SK-N-SH (cell line): ENCODE measurements at regions of chr9 and their contacts with region 1.

Region 1: GRCh38 chr9:129460323-129461261 is 160.3 kb downstream of the C9orf50 start:
- DNase-seq: peak; percentile 96
- H3K4me3 ChIP-seq: peak overlapping the region; percentile 33 to 55
- H3K27ac ChIP-seq: peak overlapping the region; percentile 99 to 100
- H3K4me1 ChIP-seq: peaks cover 39 to 44% of the 10 kb centered on the region in 2 experiments; a peak in 3 of 4 replicates
- H3K27me3 ChIP-seq: no peaks in the 10 kb centered on the region
- CTCF ChIP-seq: no peak
- EP300 ChIP-seq: peak; percentile 44 to 46; a peak in 2 of 4 replicates
- RAD21 ChIP-seq: peak; percentile 39

Region 2: GRCh38 chr9:129208207-129209032 is 252.2 kb before region 1 on chr9:
- CTCF ChIA-PET with region 1: no interaction called
- POLR2A ChIA-PET with region 1: no interaction called
- DNase-seq: no peak
- H3K4me3 ChIP-seq: no peak overlapping the region
- H3K27ac ChIP-seq: no peak overlapping the region
- H3K4me1 ChIP-seq: peaks cover 0 to 9% of the 10 kb centered on the region in 2 experiments; a peak in 1 of 4 replicates
- H3K27me3 ChIP-seq: no peaks in the 10 kb centered on the region
- CTCF ChIP-seq: no peak
- EP300 ChIP-seq: no peak
- RAD21 ChIP-seq: no peak

Region 3: DNA sequence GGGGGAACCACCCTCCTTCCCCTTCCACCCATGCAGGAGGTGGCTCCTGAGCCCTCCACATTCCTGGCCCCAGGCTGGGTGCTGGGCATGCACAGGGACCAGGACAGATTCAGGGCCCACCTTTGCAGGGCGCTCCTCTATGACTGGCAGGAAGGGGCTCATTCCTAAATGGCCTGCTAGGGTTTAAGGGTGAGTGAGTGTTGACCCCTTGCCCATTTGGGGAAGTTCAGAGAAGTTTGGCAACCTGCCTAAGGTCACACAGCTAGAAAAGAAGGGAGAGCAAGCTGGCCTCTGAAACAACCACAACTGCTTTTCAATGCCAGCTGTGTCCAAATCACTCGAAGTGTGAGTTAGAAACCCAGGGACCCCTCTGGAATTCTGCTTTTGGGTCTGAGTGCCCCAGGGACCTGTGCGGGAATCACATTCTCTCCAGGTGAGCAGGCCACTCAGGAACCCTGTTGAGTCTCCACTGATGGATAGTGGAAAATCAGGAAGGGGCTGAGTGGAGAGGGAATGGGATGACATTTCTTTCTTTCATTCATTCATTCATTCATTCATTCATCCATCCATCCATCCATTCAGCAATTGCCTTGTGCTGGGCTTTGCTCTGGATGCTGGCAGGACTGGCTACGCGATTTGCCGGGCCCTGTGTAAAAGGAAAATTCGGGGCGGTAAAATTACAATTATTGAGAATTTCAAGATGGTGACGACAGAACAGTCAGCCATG is 31.6 kb before region 1 on chr9:
- CTCF ChIA-PET with region 1: interaction called, 12 read pairs
- POLR2A ChIA-PET with region 1: interaction called, 23 read pairs
- DNase-seq: no peak
- H3K4me3 ChIP-seq: no peak overlapping the region
- H3K27ac ChIP-seq: peak overlapping the region in 1 of 2 experiments; percentile 62; a peak in 2 of 4 replicates
- H3K4me1 ChIP-seq: peaks cover 0 to 44% of the 10 kb centered on the region in 2 experiments; a peak in 1 of 4 replicates
- H3K27me3 ChIP-seq: no peaks in the 10 kb centered on the region
- CTCF ChIP-seq: no peak
- EP300 ChIP-seq: no peak
- RAD21 ChIP-seq: no peak

Region 4: DNA sequence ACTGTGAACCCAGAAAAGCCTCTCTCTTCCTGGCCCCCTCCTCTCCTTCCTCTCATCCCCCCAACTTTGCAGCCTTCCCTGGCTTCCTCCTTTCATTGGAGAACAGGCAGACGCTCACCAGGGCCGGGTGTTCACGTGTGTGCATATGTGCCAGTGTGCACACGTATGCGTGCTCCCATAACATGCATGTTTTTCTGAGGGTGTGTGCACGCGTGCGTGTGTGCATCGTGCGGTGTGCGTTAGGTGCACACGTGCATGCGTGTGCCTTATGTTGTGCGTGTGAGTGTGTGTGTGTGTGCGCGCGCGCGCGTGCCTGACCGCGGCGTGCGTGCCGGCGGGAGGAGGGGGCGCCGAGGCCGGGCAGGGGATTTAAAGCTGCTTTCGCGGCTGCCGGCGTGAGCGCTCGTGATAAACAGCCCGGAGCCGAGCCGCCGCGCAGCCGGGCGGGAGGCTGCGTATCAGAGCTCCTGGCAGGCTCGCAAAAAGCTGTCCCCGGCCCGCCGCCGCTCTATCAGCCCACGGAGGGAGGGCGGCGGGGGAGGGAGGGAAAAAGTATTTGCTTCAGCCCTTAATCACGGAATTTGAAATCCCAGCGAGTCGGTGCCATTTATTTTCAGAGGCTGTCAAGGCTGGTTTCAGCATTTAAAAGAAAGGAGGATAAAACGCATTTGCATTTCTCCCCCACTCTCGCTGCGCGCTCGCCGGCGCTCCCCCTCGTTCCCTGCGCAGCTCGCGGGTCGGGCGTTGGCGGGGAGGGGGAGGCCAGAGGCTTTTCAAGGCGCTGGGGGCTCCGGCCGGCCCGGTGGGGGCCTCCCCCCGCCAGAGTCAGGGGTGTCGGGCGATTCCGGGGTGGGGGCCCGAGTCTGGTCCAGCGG is 23.6 kb before region 1 on chr9:
- CTCF ChIA-PET with region 1: interaction called, 3 read pairs
- POLR2A ChIA-PET with region 1: interaction called, 17 read pairs
- DNase-seq: peak; percentile 88
- H3K4me3 ChIP-seq: peak overlapping the region; percentile 51 to 70
- H3K27ac ChIP-seq: peak overlapping the region in 1 of 2 experiments; percentile 64; a peak in 3 of 4 replicates
- H3K4me1 ChIP-seq: peaks cover 0 to 26% of the 10 kb centered on the region in 2 experiments; a peak in 1 of 4 replicates
- H3K27me3 ChIP-seq: no peaks in the 10 kb centered on the region
- CTCF ChIP-seq: no peak
- EP300 ChIP-seq: 0 out of 4 replicates have a peak, but pooled peaks of 1 of the 2 experiments have one; percentile 17
- RAD21 ChIP-seq: no peak; the same call in 1 of the 2 replicates

Region 5: DNA sequence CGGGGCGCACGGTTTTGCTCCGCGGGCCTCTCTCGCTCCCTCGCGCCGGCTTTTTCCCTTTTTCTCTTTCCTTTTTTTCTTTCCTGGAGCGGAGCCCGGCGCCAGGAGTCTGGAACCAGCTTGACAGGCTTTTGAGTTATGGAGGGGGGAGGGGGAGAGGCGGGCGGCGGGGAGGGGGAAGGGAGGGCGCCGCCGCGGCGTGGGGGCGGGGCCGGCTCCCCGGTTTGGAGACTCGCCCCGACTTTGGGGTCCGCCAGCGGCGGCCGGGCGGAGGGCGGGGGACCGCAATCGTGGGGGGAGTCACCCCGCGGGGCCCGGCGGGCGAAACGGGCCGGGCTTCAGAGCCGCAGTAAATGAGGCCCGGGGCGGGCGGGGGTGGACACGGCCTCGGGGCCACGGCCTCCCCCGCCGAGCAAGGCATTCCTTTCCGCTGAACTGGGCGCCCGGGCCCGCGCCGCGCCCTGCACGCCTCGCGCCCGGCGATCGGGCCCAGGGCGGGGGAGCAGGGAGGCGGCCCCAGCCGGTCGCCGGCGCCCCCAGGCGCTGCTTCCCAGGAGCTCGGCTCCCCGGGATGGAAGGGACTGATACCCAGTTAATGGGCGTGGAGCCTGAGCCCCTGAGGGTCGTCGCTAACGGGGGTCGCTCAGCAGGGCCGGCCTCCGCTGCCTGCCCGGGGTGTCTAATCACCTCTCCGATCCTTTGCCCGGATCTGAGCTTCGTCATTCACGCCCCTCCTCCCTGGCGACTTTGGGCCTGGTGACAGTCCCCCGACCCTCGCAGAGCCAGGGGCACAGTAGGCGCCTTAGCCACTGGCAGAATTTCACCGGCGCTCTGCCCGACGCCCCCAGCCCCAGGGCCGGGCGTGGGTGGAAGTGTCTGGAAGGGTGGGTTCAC is 22.2 kb after region 1 on chr9:
- CTCF ChIA-PET with region 1: interaction called, 17 read pairs
- POLR2A ChIA-PET with region 1: interaction called, 37 read pairs
- DNase-seq: peak; percentile 90
- H3K4me3 ChIP-seq: peak overlapping the region; percentile 37 to 51; a peak in 3 of 4 replicates
- H3K27ac ChIP-seq: peak overlapping the region; percentile 97 to 100
- H3K4me1 ChIP-seq: peaks cover 55 to 78% of the 10 kb centered on the region in 2 experiments; a peak in 3 of 4 replicates
- H3K27me3 ChIP-seq: no peaks in the 10 kb centered on the region
- CTCF ChIP-seq: no peak
- EP300 ChIP-seq: peak in 1 of 2 experiments; percentile 53; a peak in 1 of 4 replicates
- RAD21 ChIP-seq: peak; percentile 35

Region 6: DNA sequence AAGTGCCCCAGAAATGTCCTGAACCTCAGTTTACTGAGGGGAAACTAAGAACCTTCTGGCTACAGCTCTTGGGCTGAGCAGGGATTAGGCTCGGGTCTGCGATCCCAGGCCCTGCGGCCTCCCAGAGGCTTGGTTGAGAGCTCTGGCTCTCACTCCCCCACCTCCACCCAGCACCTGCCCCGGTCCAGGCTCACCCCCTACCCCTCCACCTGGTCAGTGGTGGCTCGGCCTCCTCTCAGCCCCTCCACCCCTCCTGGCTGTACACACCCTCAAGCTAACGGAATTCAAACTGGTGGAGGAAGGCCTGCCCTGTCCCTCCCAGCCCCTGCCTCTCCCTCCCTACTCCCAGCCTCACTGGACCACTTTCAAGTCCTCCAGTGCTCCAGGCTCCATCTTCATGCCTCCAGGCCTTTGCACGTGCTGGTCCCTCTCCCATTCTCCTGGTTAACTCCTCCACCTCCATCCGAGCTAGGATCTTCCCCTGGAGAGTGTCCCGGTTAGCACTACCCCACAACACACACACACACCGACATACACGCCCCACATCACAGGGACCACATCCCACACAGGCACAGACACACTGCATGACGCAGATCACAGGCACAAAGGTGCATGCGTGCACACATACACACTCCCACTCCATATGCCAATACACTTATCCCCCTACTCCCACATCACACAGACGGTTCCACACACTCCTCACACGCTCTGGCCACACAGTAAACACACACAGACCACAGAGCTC is 29.4 kb after region 1 on chr9:
- CTCF ChIA-PET with region 1: interaction called, 5 read pairs
- POLR2A ChIA-PET with region 1: interaction called, 62 read pairs
- DNase-seq: no peak
- H3K4me3 ChIP-seq: peak overlapping the region; percentile 40 to 60; a peak in 3 of 4 replicates
- H3K27ac ChIP-seq: peak overlapping the region; percentile 34 to 100
- H3K4me1 ChIP-seq: peaks cover 59 to 79% of the 10 kb centered on the region in 2 experiments; a peak in 3 of 4 replicates
- H3K27me3 ChIP-seq: no peaks in the 10 kb centered on the region
- CTCF ChIP-seq: no peak
- EP300 ChIP-seq: no peak
- RAD21 ChIP-seq: no peak

Region 7: GRCh38 chr9:129495534-129496325 is 35.1 kb after region 1 on chr9:
- CTCF ChIA-PET with region 1: interaction called, 5 read pairs
- POLR2A ChIA-PET with region 1: interaction called, 62 read pairs
- DNase-seq: peak; percentile 98
- H3K4me3 ChIP-seq: peak overlapping the region; percentile 52 to 70
- H3K27ac ChIP-seq: peak overlapping the region; percentile 96 to 99
- H3K4me1 ChIP-seq: peaks cover 43 to 74% of the 10 kb centered on the region in 2 experiments; a peak in 3 of 4 replicates
- H3K27me3 ChIP-seq: no peaks in the 10 kb centered on the region
- CTCF ChIP-seq: no peak
- EP300 ChIP-seq: peak in 1 of 2 experiments; percentile 42; a peak in 2 of 4 replicates
- RAD21 ChIP-seq: no peak